ENCODE measurements at regions of chr2 and their contacts with region 1.

Region 1: GRCh38 chr2:26033818-26034636 is at the start of gene RAB10:
- DNase-seq: peak; percentile 98 to 100 (median 99)
- ATAC-seq: peak; percentile 95
- H3K4me3 ChIP-seq: peak within 1 kb of the TSS; percentile 96
- H3K4me3 Mint-ChIP-seq: peak within 1 kb of the TSS; percentile 90 to 99 (median 96)
- H3K27ac ChIP-seq: peak within 1 kb of the TSS; percentile 90
- H3K27ac Mint-ChIP-seq: peak within 1 kb of the TSS; percentile 86 to 97 (median 95)
- H3K4me1 ChIP-seq: peaks cover 18 to 24% of the 10 kb centered on the region in 2 donors
- H3K4me1 Mint-ChIP-seq: peaks cover 31 to 48% (median 41%) of the 10 kb centered on the region in 7 donors
- H3K27me3 ChIP-seq: no peaks in the 10 kb centered on the region
- H3K27me3 Mint-ChIP-seq: peaks cover 0 to 2% (median 0%) of the 10 kb centered on the region in 5 donors
- total RNA-seq, gene RAB10: 25.6 to 108 (median 60.5) TPM

Region 2: DNA sequence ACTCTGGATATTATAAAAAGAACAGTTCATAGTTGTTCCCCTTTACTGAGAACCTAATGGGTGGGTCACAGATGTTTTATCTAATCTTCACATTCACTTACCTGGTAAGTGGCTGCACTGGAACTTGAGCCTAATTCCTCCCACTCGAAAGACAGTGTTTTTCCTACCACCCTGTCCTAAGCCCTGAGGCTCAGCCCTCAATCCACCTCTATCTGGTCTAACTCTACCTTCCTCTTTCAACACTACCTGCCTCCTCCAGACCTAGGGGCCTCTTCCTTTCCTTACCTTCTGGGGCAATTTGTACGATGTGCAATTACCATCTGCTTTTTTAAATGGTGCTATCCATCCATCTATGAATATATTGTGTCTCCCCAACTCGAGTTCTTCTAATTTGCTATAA is 42.1 kb before region 1 on chr2:
- CTCF ChIA-PET with region 1: interaction called, 6 read pairs
- POLR2A ChIA-PET with region 1: interaction called, 3 read pairs
- intact Hi-C with region 1: loop called (anchors 1 to 2 kb)
- DNase-seq: no peak
- ATAC-seq: peak; percentile 23
- H3K4me3 ChIP-seq: no peak overlapping the region
- H3K4me3 Mint-ChIP-seq: peak overlapping the region in 4 of 10 donors; percentile 28 to 82 (median 54)
- H3K27ac ChIP-seq: no peak overlapping the region
- H3K27ac Mint-ChIP-seq: peak overlapping the region in 7 of 9 donors; percentile 2 to 91 (median 48)
- H3K4me1 ChIP-seq: no peaks in the 10 kb centered on the region
- H3K4me1 Mint-ChIP-seq: peaks cover 0 to 18% (median 12%) of the 10 kb centered on the region in 7 donors
- H3K27me3 ChIP-seq: no peaks in the 10 kb centered on the region
- H3K27me3 Mint-ChIP-seq: peaks cover 0 to 17% (median 0%) of the 10 kb centered on the region in 5 donors

Region 3: DNA sequence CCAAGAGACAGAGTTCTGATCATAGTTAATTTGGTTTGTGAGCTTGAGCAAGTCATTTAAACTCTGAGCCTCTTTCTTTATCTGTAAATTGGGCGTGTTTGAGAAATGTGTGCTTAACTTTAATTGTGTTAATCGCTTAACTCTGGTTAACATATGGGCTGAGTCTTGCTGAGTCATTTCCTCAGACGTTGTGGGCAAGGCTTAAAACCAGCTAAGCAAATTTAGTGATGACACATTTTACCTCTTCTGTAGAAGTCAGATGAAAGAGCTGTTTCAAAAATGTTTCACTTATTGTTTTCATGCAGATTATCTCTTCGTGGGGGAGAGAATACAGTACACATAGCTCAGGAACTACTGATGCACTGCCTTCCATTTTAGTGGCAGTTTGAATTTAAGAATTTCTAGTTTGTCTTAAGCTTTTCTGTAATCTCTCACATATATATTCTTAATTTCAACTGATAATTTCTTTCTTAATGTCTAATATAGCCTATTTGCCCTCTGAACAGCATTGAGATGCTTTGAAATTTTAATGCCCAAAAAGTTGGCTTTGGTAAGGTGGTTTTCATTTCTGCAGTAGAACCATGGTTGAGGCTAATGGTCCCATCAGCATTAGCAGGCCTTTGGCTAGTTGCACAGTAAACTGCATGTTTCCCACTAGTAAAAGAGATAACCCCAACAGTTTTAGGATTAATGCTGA is 34.7 kb after region 1 on chr2:
- CTCF ChIA-PET with region 1: no interaction called
- POLR2A ChIA-PET with region 1: interaction called, 3 read pairs
- intact Hi-C with region 1: loop called (anchors 1 kb)
- DNase-seq: peak in 7 of 9 donors; percentile 12 to 49 (median 24)
- ATAC-seq: peak; percentile 89
- H3K4me3 ChIP-seq: no peak overlapping the region
- H3K4me3 Mint-ChIP-seq: peak overlapping the region in 5 of 10 donors; percentile 19 to 62 (median 47)
- H3K27ac ChIP-seq: no peak overlapping the region
- H3K27ac Mint-ChIP-seq: peak overlapping the region in 4 of 9 donors; percentile 4 to 62 (median 32)
- H3K4me1 ChIP-seq: peaks cover 7 to 25% of the 10 kb centered on the region in 2 donors
- H3K4me1 Mint-ChIP-seq: peaks cover 46 to 72% (median 54%) of the 10 kb centered on the region in 7 donors
- H3K27me3 ChIP-seq: no peaks in the 10 kb centered on the region
- H3K27me3 Mint-ChIP-seq: no peaks in the 10 kb centered on the region

Region 4: DNA sequence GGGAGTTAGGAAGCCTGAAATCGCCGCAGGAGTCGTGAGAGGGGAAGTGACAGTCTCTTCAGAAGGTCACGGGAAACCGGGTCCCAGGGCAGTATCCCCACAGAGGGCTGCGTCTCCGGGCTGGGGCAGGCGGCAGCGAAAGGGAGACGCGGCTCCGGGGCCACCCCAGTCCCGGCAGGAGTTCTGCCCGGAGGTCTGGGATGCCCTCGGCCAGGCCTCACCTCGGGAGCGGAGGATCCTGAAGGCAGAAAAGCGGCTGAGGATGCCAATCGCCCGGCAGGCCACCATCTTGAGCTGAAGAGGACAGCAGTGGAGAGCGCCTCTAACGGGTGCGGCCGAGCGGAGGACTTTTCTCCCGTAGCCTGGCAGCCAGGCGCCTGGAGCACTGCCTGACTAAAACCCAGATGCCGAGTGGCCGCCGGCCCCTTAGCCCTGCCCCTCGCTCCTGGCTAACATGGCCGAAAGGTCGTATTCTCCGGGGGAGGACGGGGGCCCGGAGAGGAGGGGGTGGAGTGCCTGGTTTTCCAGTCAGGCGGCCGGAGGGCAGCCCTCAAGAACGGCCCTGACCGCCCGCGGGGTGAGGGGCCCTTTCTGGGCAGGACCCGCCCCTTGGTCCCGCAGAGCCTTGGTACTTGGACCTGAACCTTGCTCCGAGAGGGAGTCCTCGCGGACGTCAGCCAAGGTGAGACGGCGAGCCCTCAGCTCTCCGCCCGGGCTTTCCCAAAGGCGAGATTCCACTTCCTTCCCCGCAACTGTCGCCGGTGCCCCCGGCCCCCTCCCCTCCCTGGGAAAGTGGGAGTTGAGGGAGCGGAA is 210.5 kb after region 1 on chr2 and contains the starts of genes HADHA and HADHB:
- CTCF ChIA-PET with region 1: no interaction called
- POLR2A ChIA-PET with region 1: interaction called, 3 read pairs
- intact Hi-C with region 1: loop called (anchors 1 to 2 kb)
- DNase-seq: peak; percentile 76 to 91 (median 87)
- ATAC-seq: peak; percentile 92
- H3K4me3 ChIP-seq: peak within 1 kb of the TSS; percentile 99
- H3K4me3 Mint-ChIP-seq: peak within 1 kb of the TSS; percentile 96 to 100 (median 99)
- H3K27ac ChIP-seq: peak within 1 kb of the TSS; percentile 96
- H3K27ac Mint-ChIP-seq: peak within 1 kb of the TSS; percentile 98 to 100 (median 99)
- H3K4me1 ChIP-seq: peaks cover 13 to 19% of the 10 kb centered on the region in 2 donors
- H3K4me1 Mint-ChIP-seq: peaks cover 47 to 73% (median 57%) of the 10 kb centered on the region in 7 donors
- H3K27me3 ChIP-seq: no peaks in the 10 kb centered on the region
- H3K27me3 Mint-ChIP-seq: no peaks in the 10 kb centered on the region
- total RNA-seq, gene HADHA: 83.8 to 111 (median 102) TPM
- total RNA-seq, gene HADHB: 38.1 to 77.5 (median 64.2) TPM

Region 5: GRCh38 chr2:26382564-26382963 is 348.5 kb after region 1 on chr2:
- CTCF ChIA-PET with region 1: no interaction called
- POLR2A ChIA-PET with region 1: no interaction called
- intact Hi-C with region 1: no loop called
- DNase-seq: no peak
- ATAC-seq: no peak
- H3K4me3 ChIP-seq: no peak overlapping the region
- H3K4me3 Mint-ChIP-seq: no peak overlapping the region
- H3K27ac ChIP-seq: no peak overlapping the region
- H3K27ac Mint-ChIP-seq: peak overlapping the region in 1 of 9 donors; percentile 28
- H3K4me1 ChIP-seq: no peaks in the 10 kb centered on the region
- H3K4me1 Mint-ChIP-seq: peaks cover 0 to 24% (median 8%) of the 10 kb centered on the region in 7 donors
- H3K27me3 ChIP-seq: no peaks in the 10 kb centered on the region
- H3K27me3 Mint-ChIP-seq: no peaks in the 10 kb centered on the region

Region 6: GRCh38 chr2:26764078-26764887 is 730.3 kb after region 1 on chr2 and contains the start of gene SLC35F6:
- CTCF ChIA-PET with region 1: no interaction called
- POLR2A ChIA-PET with region 1: no interaction called
- intact Hi-C with region 1: loop called in 1 of 2 experiments (anchors 10 kb)
- DNase-seq: peak; percentile 70 to 90 (median 86)
- ATAC-seq: peak; percentile 95
- H3K4me3 ChIP-seq: peak within 1 kb of the TSS; percentile 92
- H3K4me3 Mint-ChIP-seq: peak within 1 kb of the TSS; percentile 85 to 97 (median 94)
- H3K27ac ChIP-seq: peak within 1 kb of the TSS; percentile 82
- H3K27ac Mint-ChIP-seq: peak within 1 kb of the TSS; percentile 62 to 97 (median 91)
- H3K4me1 ChIP-seq: peaks cover 23% of the 10 kb centered on the region in 2 donors
- H3K4me1 Mint-ChIP-seq: peaks cover 28 to 54% (median 39%) of the 10 kb centered on the region in 7 donors
- H3K27me3 ChIP-seq: no peaks in the 10 kb centered on the region
- H3K27me3 Mint-ChIP-seq: peaks cover 0 to 6% (median 0%) of the 10 kb centered on the region in 5 donors
- total RNA-seq, gene SLC35F6: 17.3 to 22.5 (median 19.9) TPM

Measured in naive thymus-derived CD4-positive, alpha-beta T cell (primary cell).